HCT116 (cell line): ENCODE measurements at regions of chr6 and their contacts with region 1.

Region 1: DNA sequence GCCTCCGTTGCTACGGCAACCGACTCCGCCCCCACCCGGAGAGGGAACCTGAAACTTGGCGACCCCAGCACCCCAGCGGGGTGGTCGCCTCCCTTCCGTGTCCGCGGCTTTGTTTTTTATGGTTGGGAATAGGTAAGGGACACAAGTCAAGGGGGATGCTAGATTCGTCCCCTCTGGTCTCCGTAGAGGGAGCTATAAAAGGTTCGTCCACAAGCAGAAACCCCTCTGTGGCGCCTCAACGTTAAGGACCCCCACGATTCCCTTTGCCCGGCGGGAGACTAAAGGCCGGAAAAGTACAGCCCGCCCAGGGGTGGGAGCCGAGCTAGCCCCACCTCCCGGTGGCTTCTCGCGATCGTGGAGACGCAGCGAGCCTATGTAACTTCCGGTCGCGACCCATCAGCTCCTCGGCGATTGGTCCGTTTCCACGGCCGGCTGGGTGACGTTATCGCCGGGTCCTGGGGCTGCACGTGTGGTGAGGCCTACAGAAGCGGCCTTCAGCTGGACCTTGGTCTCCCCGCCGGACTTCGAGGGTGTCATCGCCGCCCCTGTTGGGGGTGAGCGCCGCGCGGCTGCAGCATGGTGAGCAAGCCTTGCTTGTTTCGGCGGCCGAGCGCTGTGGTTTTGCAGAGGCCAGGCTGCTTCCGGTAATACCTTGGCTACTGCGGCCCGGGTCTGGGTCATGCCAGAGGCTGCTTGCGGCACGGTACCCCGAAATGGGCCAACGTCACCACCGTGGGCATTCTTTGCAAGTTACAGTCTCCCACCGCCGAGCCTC is at the start of gene LTV1:
- DNase-seq: peak; percentile 87
- ATAC-seq: peak; percentile 98
- H3K4me3 ChIP-seq: peak within 1 kb of the TSS; percentile 93 to 97
- H3K27ac ChIP-seq: peak within 1 kb of the TSS; percentile 57
- H3K4me1 ChIP-seq: peaks cover 4 to 11% of the 10 kb centered on the region in 2 experiments; a peak in 3 of 4 replicates
- H3K27me3 ChIP-seq: no peaks in the 10 kb centered on the region
- CTCF ChIP-seq: no peak
- POLR2A ChIP-seq: peak; percentile 65
- RAD21 ChIP-seq: no peak
- total RNA-seq, gene LTV1: 40.3 TPM

Region 2: DNA sequence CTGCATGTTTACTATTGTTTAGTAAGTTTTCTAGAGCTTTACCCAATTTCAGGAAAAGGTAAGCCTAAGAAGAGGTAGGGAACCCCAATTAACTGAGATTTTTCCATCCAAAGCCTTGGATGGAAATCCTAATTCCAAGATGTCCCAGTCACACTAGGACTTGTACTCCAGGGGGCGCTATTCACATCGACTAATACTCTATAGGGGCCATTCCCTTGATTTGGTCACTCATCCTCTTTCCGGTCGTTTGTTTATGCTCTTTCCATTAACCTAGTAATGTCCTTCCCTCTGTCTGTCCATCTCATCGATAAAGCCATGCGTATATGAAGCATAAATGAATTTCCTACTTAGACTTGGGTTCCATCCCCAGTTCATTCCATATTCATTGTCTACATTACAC is 250.8 kb before region 1 on chr6:
- CTCF ChIA-PET with region 1: no interaction called
- POLR2A ChIA-PET with region 1: no interaction called
- RAD21 ChIA-PET with region 1: no interaction called
- intact Hi-C with region 1: loop called (anchors 5 kb)
- DNase-seq: peak; percentile 23
- ATAC-seq: peak; percentile 80
- H3K4me3 ChIP-seq: no peak overlapping the region
- H3K27ac ChIP-seq: no peak overlapping the region
- H3K4me1 ChIP-seq: no peaks in the 10 kb centered on the region
- H3K27me3 ChIP-seq: no peaks in the 10 kb centered on the region
- CTCF ChIP-seq: peak; percentile 33 to 78 (median 61); a peak in 5 of 6 replicates
- POLR2A ChIP-seq: no peak
- RAD21 ChIP-seq: peak; percentile 60

Region 3: GRCh38 chr6:143677891-143678791 is 164.9 kb before region 1 on chr6 and contains the start of gene PHACTR2:
- CTCF ChIA-PET with region 1: no interaction called
- POLR2A ChIA-PET with region 1: no interaction called
- RAD21 ChIA-PET with region 1: no interaction called
- intact Hi-C with region 1: loop called (anchors 5 kb)
- DNase-seq: peak; percentile 54
- ATAC-seq: peak; percentile 80
- H3K4me3 ChIP-seq: peak within 1 kb of the TSS; percentile 77 to 80
- H3K27ac ChIP-seq: peak within 1 kb of the TSS; percentile 58
- H3K4me1 ChIP-seq: peaks cover 46 to 53% of the 10 kb centered on the region in 2 experiments
- H3K27me3 ChIP-seq: no peaks in the 10 kb centered on the region
- CTCF ChIP-seq: no peak
- POLR2A ChIP-seq: peak; percentile 35
- RAD21 ChIP-seq: no peak
- total RNA-seq, gene PHACTR2: 27.6 TPM

Region 4: DNA sequence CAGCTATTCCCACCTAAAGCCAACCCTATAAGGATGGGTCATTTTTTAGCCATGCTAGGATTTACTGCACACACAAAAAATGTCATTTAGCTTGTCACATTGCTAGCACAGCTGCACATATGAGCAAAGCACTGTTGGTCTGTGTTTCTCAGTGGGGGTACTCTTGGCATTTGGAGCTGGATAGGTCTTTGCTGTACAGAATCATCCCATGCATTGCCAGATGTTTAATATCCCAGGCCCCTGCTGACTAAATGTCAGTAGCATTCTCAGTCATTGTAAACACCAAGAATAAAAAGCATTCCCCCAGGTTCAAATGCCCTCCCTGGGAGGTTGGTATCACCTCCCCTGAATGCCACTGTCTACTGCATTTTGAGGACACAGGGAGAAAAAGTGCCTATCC is 14.5 kb before region 1 on chr6:
- CTCF ChIA-PET with region 1: no interaction called
- POLR2A ChIA-PET with region 1: no interaction called
- RAD21 ChIA-PET with region 1: no interaction called
- intact Hi-C with region 1: no loop called
- DNase-seq: no peak
- ATAC-seq: no peak
- H3K4me3 ChIP-seq: no peak overlapping the region
- H3K27ac ChIP-seq: no peak overlapping the region
- H3K4me1 ChIP-seq: 0 out of 4 replicates have a peak, but pooled peaks cover 0 to 2% of the 10 kb centered on the region in 2 experiments
- H3K27me3 ChIP-seq: no peaks in the 10 kb centered on the region
- CTCF ChIP-seq: no peak
- POLR2A ChIP-seq: no peak
- RAD21 ChIP-seq: no peak